Activated CD4-positive, alpha-beta memory T cell treated with anti-CD3 and anti-CD28 coated beads, Interleukin-2, amount 10 ng/mL, durations not matched to agents 7 days and 5 days (primary cell): ENCODE measurements at regions of chr9 and their contacts with region 1.

Region 1: DNA sequence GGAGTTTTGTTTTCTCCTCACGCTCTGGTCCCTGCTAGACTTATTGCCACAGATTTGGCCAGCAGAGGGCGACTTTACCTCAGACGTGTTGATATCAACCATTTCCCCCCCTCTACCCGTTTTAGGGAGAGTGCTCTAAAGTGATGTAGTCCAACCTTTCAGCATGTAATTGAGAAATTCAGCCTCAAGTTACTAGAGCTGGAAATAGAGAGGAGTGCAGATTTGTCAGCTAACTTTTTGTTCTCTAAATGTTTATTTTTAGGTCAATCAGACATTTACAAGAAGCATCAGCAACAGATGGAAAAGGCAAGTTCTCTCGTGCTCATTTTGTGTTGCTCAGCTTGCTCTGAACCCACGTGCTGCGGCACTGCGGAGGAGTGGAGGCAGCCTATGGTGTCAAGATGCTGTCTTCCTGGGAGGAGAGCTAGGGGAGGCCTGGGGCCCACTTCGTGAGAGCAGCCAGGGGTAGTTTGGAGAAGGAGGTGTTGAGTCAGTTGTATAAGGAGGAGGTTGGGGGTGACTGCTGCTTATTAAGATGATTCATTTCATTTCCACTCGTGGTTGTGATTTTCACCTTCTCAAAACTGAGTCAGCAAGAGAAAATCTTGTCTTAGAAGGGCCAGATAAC is 53.6 kb downstream of the GPR107 start:
- DNase-seq: peak; percentile 85
- H3K4me3 Mint-ChIP-seq: no peak overlapping the region
- H3K27ac Mint-ChIP-seq: peak overlapping the region; percentile 47
- H3K4me1 Mint-ChIP-seq: peaks cover 37% of the 10 kb centered on the region
- H3K27me3 Mint-ChIP-seq: no peaks in the 10 kb centered on the region

Region 2: DNA sequence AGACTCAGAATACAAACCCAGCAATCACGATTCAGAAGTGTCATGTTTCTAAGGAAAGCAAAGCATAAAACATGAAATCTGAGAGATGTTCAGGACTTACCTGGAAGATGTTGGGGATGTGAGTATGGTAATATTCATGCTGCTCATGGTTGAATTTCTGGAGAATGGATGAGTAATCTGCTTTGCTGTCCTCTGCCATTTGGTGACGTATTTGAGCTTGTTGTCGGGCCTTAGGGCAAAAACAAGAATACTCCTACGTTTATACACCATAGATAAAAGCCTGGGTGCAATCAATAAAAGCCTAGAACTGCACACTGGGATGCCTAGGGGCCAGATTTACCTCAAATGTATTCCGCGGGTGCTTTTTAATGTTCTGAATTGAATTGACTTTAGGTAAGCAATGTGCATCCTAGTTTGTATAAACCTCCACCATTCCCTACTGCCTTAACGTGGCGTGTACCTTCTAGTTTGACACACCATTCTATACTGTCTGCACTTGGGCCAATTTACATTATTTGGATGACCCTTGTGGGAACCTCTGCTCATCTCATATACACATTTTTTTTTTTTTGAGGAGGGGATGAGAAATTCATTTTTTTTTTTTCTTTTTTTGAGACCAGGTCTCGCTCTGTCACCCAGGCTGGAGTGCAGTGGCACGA is 177.8 kb before region 1 on chr9:
- CTCF ChIA-PET with region 1: no interaction called
- POLR2A ChIA-PET with region 1: no interaction called
- DNase-seq: no peak
- H3K4me3 Mint-ChIP-seq: no peak overlapping the region
- H3K27ac Mint-ChIP-seq: peak overlapping the region; percentile 16
- H3K4me1 Mint-ChIP-seq: peaks cover 46% of the 10 kb centered on the region
- H3K27me3 Mint-ChIP-seq: no peaks in the 10 kb centered on the region

Region 3: DNA sequence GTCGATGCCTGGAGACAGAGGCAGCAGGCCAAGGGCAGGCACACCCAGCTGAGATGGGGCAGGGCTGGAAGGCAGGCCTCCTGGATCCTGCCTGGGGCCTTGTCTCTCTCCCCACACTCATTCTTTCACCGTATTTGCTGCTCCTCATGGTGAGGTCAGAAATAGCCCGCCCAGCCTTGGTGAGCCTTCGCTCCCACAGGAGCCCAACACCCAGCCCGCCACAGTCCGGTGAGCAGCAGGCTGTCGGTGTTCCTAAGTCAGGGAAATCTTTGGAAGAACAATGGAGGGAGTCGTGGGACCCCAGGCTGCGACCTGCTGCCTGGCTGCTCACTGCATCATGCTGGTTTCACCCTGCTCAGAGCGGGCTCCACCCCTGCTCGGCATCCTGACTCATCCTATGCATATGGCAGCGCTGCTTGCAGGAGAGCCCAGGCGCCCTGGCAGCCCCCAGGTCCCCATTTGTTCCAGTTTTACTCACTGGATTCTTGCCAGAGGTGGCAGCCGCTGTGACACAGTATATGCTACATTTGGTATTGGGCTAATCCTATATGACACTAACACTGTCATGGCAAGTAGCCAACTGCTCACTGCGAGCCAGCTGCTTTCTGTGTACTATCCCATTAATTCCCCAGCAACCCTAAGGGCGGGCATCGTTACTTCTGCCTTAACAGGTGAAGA is 11.6 kb after region 1 on chr9:
- CTCF ChIA-PET with region 1: interaction called, 11 read pairs
- POLR2A ChIA-PET with region 1: interaction called, 3 read pairs
- DNase-seq: no peak
- H3K4me3 Mint-ChIP-seq: no peak overlapping the region
- H3K27ac Mint-ChIP-seq: no peak overlapping the region
- H3K4me1 Mint-ChIP-seq: no peaks in the 10 kb centered on the region
- H3K27me3 Mint-ChIP-seq: no peaks in the 10 kb centered on the region

Region 4: DNA sequence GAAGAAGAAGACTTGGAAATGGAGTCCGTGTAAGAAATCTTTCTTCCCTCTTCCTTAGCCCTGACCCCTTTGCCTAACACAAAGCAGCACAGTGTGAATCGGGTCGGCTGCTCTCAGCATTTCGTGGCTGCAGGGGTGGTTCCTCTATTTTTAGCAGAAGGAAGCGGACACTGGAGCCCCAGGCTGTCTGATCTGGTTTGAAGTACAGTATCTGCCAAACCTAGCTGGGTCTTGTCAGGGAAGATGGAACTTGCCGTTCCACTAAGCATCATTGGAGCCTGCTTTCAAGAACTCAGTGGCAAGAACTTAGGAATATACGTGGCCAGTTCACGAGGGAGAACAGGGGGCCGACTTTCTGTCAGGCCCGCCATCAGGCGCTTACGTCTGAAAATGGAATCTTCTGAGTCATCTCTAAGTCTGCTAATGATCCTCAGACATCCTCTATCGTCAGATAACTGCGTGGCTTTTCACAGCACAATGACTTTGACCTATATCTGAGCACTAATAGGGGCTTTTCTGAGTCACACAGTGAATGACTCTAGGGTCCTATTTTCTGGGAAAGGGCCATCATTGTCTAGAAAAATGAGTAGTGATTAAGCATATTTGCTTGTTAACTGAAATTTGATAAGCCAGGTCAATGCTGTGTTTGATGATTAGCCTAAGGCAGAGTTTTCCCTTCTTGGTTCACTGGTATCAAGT is 21.5 kb after region 1 on chr9:
- CTCF ChIA-PET with region 1: interaction called, 12 read pairs
- POLR2A ChIA-PET with region 1: interaction called, 8 read pairs
- DNase-seq: peak; percentile 64
- H3K4me3 Mint-ChIP-seq: peak overlapping the region; percentile 67
- H3K27ac Mint-ChIP-seq: peak overlapping the region; percentile 100
- H3K4me1 Mint-ChIP-seq: peaks cover 54% of the 10 kb centered on the region
- H3K27me3 Mint-ChIP-seq: no peaks in the 10 kb centered on the region

Region 5: GRCh38 chr9:130235897-130236668 is 128.7 kb after region 1 on chr9:
- CTCF ChIA-PET with region 1: interaction called, 75 read pairs
- POLR2A ChIA-PET with region 1: interaction called, 6 read pairs
- DNase-seq: peak; percentile 71
- H3K4me3 Mint-ChIP-seq: no peak overlapping the region
- H3K27ac Mint-ChIP-seq: no peak overlapping the region
- H3K4me1 Mint-ChIP-seq: peaks cover 33% of the 10 kb centered on the region
- H3K27me3 Mint-ChIP-seq: no peaks in the 10 kb centered on the region

Region 6: GRCh38 chr9:130243015-130243734 is 135.8 kb after region 1 on chr9:
- CTCF ChIA-PET with region 1: interaction called, 75 read pairs
- POLR2A ChIA-PET with region 1: interaction called, 6 read pairs
- DNase-seq: peak; percentile 84
- H3K4me3 Mint-ChIP-seq: peak overlapping the region; percentile 52
- H3K27ac Mint-ChIP-seq: peak overlapping the region; percentile 66
- H3K4me1 Mint-ChIP-seq: peaks cover 37% of the 10 kb centered on the region
- H3K27me3 Mint-ChIP-seq: no peaks in the 10 kb centered on the region